Heart right ventricle (tissue), 16 donors: ENCODE measurements at regions of chr11 and their contacts with region 1.

Region 1: GRCh38 chr11:103241574-103241973 is 132.3 kb downstream of the DYNC2H1 start:
- DNase-seq: no peak
- ATAC-seq: no peak
- H3K4me3 ChIP-seq: no peak overlapping the region
- H3K27ac ChIP-seq: no peak overlapping the region
- H3K4me1 ChIP-seq: no peaks in the 10 kb centered on the region
- H3K27me3 ChIP-seq: no peaks in the 10 kb centered on the region
- CTCF ChIP-seq: no peak

Region 2: DNA sequence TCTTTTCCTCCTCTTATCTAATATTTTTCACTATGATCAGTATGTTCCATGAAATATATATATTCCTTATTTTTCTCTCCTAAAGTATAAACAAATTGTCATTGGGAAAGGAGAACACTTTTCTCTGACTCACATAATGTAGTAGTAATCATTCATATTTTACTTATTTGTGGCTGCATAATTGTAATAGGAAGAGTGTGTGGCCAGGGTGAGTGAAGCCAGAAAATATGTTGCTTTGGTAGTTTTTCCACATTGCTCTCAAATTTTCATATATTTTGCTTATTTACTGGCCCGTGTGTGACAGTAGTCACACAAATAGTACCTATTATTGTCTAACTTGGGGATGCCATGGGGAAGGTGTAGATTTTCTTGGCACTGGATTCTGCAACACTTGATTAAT is 39.7 kb after region 1 on chr11:
- intact Hi-C with region 1: no loop called
- DNase-seq: no peak
- ATAC-seq: no peak
- H3K4me3 ChIP-seq: no peak overlapping the region
- H3K27ac ChIP-seq: no peak overlapping the region
- H3K4me1 ChIP-seq: no peaks in the 10 kb centered on the region
- H3K27me3 ChIP-seq: no peaks in the 10 kb centered on the region
- CTCF ChIP-seq: no peak

Region 3: DNA sequence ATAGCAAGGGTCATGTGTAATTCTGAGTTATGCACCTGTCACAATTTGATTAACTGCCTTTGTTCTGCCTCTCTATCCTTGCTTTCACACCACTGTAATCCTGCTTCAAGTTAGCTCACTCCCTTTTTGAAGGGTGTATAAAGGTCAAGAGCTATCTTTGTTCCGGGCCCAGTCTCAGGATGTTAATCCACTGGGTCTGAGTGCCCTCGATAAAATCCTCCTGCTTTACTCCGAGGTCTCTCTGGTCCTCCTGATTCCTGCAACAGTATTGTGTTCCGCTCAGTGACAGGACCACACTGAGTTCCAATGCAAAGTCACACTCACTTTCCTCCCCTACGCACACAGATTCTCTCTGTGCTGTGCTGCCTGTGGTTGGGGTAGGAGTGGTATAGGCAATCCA is 54.1 kb after region 1 on chr11:
- intact Hi-C with region 1: loop called in 1 of 10 experiments (anchors 10 kb)
- DNase-seq: no peak
- ATAC-seq: no peak
- H3K4me3 ChIP-seq: no peak overlapping the region
- H3K27ac ChIP-seq: no peak overlapping the region
- H3K4me1 ChIP-seq: no peaks in the 10 kb centered on the region
- H3K27me3 ChIP-seq: no peaks in the 10 kb centered on the region
- CTCF ChIP-seq: no peak